ENCODE measurements at regions of chr18 and their contacts with region 1.

Region 1: DNA sequence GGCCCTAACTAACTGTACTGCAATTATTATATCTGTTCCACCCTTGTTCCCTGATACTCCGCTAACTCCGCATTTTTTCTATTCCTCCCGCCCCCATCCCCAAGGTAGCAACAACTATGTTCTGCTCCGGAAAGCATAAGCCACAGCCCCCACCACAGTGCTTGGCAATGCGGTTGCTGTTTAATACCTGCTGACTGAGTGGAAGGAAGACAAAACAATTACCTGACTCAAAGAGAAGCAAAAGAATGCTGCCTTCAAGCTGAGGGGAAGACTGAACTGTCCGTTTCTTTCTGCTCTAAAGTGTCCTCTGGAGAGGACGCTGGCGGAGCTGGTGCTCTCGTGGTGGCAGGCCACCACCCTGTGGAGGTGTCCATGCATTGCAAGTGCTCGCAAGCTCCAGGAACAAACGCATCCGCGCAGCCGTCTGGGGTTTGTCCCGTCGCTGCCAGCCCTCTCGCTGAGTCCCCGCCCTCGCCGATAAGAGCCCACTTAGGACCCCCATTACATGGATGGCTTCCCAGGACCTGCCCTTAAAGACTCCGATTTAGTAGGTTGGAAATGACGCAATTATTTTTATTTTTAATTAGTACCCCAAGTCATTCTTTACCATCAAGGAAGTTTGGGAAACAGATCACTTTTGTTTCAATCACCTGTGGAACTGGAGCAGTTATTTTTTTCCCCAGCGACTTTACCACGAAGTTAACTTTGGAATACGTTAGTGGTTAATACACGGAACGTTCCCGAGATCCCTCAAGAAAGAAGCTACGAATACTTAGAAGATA is 1.6 kb upstream of the MYL12A start:
- DNase-seq: peak; percentile 85
- H3K4me3 Mint-ChIP-seq: peak overlapping the region; percentile 99
- H3K27ac Mint-ChIP-seq: peak overlapping the region; percentile 100
- H3K4me1 Mint-ChIP-seq: peaks cover 29% of the 10 kb centered on the region
- H3K27me3 Mint-ChIP-seq: no peaks in the 10 kb centered on the region

Region 2: GRCh38 chr18:2571200-2572143 is 674.6 kb before region 1 on chr18 and contains the starts of genes METTL4 and NDC80:
- CTCF ChIA-PET with region 1: no interaction called
- POLR2A ChIA-PET with region 1: interaction called, 11 read pairs
- DNase-seq: peak; percentile 87
- H3K4me3 Mint-ChIP-seq: peak within 1 kb of the TSS; percentile 95
- H3K27ac Mint-ChIP-seq: peak within 1 kb of the TSS; percentile 96
- H3K4me1 Mint-ChIP-seq: peaks cover 55% of the 10 kb centered on the region
- H3K27me3 Mint-ChIP-seq: no peaks in the 10 kb centered on the region
- total RNA-seq, gene METTL4: 22.1 to 23.7 TPM
- total RNA-seq, gene NDC80: 78.0 to 78.9 TPM

Region 3: GRCh38 chr18:2958819-2959298 is 287.2 kb before region 1 on chr18:
- CTCF ChIA-PET with region 1: interaction called, 12 read pairs
- POLR2A ChIA-PET with region 1: interaction called, 40 read pairs
- DNase-seq: peak; percentile 67
- H3K4me3 Mint-ChIP-seq: peak overlapping the region; percentile 73
- H3K27ac Mint-ChIP-seq: peak overlapping the region; percentile 99
- H3K4me1 Mint-ChIP-seq: peaks cover 89% of the 10 kb centered on the region
- H3K27me3 Mint-ChIP-seq: no peaks in the 10 kb centered on the region

Region 4: DNA sequence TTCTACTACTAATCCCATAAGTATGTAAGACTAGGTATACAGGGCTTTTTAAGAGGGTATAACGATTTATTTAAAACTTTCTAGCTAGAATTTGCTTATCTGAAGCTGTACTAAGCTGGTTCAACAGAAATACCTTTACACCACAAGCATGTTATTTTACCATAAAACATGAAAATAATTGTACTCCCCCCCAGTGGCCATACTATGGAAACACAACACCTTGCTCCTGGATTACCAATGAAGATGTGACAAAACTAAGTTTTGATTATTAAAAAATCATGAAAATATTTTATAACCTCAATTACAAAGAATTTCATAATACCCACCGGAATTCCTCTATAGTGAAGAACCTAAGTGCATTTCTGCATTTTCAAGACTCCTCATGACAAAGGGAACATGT is 260.4 kb before region 1 on chr18:
- CTCF ChIA-PET with region 1: interaction called, 40 read pairs
- POLR2A ChIA-PET with region 1: interaction called, 22 read pairs
- DNase-seq: no peak
- H3K4me3 Mint-ChIP-seq: no peak overlapping the region
- H3K27ac Mint-ChIP-seq: no peak overlapping the region
- H3K4me1 Mint-ChIP-seq: peaks cover 71% of the 10 kb centered on the region
- H3K27me3 Mint-ChIP-seq: no peaks in the 10 kb centered on the region

Region 5: DNA sequence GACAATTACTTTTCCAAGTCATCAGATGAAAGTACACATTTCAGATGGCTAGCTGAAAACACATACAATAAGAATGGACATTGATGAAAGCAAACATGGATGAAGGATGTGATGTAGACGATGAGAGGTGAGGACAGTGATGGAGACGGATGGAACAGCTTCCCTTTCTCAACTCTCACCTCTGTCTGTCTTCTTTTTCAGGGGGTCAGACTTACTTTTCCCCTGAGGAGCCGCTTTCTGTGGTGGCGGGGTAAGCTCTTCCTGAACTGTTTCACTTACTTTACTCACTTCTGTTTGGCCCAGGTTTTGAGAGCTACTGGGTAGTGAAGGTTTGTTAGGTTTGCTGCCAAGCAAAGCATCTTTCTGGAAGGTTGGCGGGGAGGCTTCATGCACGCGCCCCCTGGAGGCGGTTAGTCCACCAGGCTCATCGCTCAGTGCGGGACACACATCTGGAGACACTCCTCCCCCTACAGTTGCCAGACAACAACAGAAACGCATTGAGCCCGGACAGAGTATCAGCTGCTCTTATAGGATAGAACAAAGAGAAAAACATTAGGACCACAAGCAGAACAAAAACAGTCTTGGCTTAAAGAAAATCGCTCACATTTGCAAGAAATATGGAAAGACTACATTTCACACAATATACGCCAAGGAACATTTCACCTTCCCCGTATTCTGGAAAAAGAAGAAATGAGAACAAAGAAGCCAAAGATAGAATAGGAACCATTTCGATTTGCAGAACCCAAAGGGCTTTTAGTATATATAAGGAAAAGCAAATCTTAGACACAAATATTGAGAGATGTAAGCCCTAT is 116.8 kb before region 1 on chr18:
- CTCF ChIA-PET with region 1: interaction called, 20 read pairs
- POLR2A ChIA-PET with region 1: interaction called, 5 read pairs
- DNase-seq: peak; percentile 84
- H3K4me3 Mint-ChIP-seq: no peak overlapping the region
- H3K27ac Mint-ChIP-seq: no peak overlapping the region
- H3K4me1 Mint-ChIP-seq: peaks cover 9% of the 10 kb centered on the region
- H3K27me3 Mint-ChIP-seq: peaks cover 2% of the 10 kb centered on the region

Region 6: GRCh38 chr18:3199942-3200645 is 46.0 kb before region 1 on chr18:
- CTCF ChIA-PET with region 1: no interaction called
- POLR2A ChIA-PET with region 1: no interaction called
- DNase-seq: no peak
- H3K4me3 Mint-ChIP-seq: no peak overlapping the region
- H3K27ac Mint-ChIP-seq: no peak overlapping the region
- H3K4me1 Mint-ChIP-seq: no peaks in the 10 kb centered on the region
- H3K27me3 Mint-ChIP-seq: peaks cover 11% of the 10 kb centered on the region

Region 7: GRCh38 chr18:3297025-3297984 is 51.3 kb after region 1 on chr18:
- CTCF ChIA-PET with region 1: interaction called, 7 read pairs
- POLR2A ChIA-PET with region 1: interaction called, 17 read pairs
- DNase-seq: peak; percentile 95
- H3K4me3 Mint-ChIP-seq: peak overlapping the region; percentile 88
- H3K27ac Mint-ChIP-seq: peak overlapping the region; percentile 72
- H3K4me1 Mint-ChIP-seq: peaks cover 9% of the 10 kb centered on the region
- H3K27me3 Mint-ChIP-seq: peaks cover 30% of the 10 kb centered on the region

Region 8: GRCh38 chr18:3604498-3605408 is 358.7 kb after region 1 on chr18:
- CTCF ChIA-PET with region 1: no interaction called
- POLR2A ChIA-PET with region 1: interaction called, 49 read pairs
- DNase-seq: peak; percentile 50
- H3K4me3 Mint-ChIP-seq: no peak overlapping the region
- H3K27ac Mint-ChIP-seq: no peak overlapping the region
- H3K4me1 Mint-ChIP-seq: peaks cover 18% of the 10 kb centered on the region
- H3K27me3 Mint-ChIP-seq: no peaks in the 10 kb centered on the region